ENCODE measurements at regions of chr16 and their contacts with region 1.

Region 1: DNA sequence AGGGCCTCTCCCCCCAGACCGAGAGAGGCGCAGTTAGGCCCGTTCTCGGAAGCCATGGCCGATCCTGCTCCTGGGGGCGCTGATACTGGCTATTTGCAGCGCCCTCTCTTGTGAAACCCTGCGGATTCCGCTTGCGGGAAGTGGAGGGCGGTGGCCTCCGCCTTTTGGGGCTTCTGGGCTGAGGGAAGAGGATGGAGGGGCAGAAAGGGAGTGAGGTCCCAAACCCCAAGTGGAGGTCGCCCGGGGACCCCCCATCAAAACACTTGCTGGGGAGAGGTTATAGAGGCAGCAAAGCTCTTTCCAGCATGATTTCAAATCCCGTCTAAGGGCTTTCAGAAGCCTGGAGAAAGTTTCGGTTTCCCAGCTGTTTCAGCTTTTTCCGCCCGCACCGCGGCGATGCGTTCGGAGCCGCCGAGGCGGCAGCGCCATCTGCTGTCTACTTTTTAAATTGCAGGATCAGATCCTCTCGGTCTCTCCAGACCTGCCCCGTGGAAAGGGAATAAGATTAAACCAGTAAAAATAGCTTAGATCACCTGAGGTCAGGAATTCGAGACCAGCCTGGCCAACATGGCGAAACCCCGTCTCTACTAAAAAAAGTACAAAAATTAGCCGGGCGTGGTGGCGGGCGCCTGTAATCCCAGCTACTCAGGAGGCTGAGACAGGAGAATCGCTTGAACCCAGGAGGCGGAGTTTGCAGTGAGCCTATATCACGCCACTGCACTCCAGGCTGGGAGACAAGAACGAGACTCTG is 15.8 kb downstream of the SNX20 start:
- DNase-seq: no peak
- H3K4me3 ChIP-seq: peak overlapping the region; percentile 42 to 44
- H3K27ac ChIP-seq: peak overlapping the region; percentile 9
- H3K4me1 ChIP-seq: peaks cover 16% of the 10 kb centered on the region
- H3K27me3 ChIP-seq: no peaks in the 10 kb centered on the region
- CTCF ChIP-seq: peak; percentile 75 to 81 (median 80)
- POLR2A ChIP-seq: no peak

Region 2: DNA sequence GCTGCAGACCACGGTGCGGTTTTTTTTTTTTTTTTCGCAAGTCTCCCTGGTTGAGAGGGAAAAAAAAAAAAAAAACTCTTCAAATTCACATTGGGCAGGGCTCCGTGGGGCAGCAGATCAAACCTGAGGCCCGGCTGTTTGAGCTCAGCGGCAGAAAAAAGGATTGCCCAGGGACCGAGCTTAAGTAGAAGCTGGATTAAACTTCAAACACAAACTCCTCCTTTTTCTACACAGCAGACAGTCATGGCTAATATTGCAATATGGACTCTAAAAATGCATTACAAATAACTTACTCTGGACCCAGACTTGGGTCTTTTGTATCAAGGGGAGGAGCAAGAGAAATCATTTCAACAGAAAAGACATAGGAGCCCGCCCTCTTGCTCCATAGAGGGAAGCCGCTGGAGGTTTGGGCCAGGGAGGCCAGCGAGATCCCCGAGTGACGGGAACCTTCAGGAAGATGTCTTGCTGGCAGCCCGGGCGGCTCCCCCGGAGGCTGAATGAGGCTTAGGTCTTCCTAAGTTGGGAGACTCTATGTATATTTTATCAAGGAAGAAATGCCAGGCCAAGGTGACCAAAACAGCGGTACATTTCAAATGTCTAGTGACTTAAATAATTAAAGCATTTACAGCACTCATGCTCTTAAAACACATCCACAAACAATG is 977.1 kb before region 1 on chr16:
- intact Hi-C with region 1: no loop called
- DNase-seq: no peak
- H3K4me3 ChIP-seq: no peak overlapping the region
- H3K27ac ChIP-seq: no peak overlapping the region
- H3K4me1 ChIP-seq: no peaks in the 10 kb centered on the region
- H3K27me3 ChIP-seq: no peaks in the 10 kb centered on the region
- CTCF ChIP-seq: no peak
- POLR2A ChIP-seq: no peak

Region 3: DNA sequence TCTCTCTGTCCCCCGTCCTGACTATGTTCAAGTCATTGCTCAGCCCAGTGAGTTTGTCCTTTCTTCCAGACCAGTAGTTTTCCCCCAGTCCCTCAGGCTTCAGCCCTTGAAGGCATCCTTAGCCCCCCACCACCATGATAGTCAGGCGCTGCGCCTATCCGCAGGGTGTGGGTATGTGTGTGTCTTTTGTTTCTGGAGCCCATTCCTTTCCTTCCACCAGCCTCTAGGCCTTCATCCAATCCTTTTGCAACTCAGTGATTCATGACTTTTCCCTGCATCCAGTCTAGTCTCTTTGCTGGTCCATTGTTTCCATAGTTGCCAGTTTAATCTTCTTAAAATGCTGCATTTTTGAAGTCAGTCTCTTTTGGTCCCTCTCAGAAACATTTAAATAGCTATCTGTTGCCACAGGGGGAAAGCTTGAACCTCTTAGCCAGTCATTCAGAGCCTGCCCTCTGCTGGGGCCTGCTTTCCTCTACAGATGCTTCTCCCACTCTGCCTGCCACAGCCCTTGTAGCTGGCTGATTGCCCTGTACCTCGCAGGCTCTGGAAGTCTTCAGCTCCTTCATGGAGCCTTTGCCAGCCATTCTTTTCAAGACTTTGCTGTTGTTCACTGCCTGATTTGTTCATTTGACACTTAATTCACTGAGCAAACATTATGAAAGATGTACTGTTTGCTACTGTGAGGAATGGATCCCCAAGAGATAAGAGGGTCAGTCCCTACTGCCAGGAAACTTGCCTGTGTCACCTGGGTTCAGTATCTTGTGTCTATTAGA is 454.9 kb before region 1 on chr16:
- intact Hi-C with region 1: loop called (anchors 10 kb)
- DNase-seq: no peak
- H3K4me3 ChIP-seq: no peak overlapping the region
- H3K27ac ChIP-seq: peak overlapping the region; percentile 16
- H3K4me1 ChIP-seq: peaks cover 38% of the 10 kb centered on the region
- H3K27me3 ChIP-seq: no peaks in the 10 kb centered on the region
- CTCF ChIP-seq: peak in 1 of 3 experiments; percentile 54
- POLR2A ChIP-seq: no peak

Region 4: GRCh38 chr16:50371936-50372595 is 293.2 kb before region 1 on chr16:
- intact Hi-C with region 1: loop called (anchors 10 kb)
- DNase-seq: no peak
- H3K4me3 ChIP-seq: no peak overlapping the region
- H3K27ac ChIP-seq: no peak overlapping the region
- H3K4me1 ChIP-seq: peaks cover 9% of the 10 kb centered on the region
- H3K27me3 ChIP-seq: no peaks in the 10 kb centered on the region
- CTCF ChIP-seq: no peak
- POLR2A ChIP-seq: no peak

Region 5: GRCh38 chr16:50611332-50611934 is 53.9 kb before region 1 on chr16:
- intact Hi-C with region 1: no loop called
- DNase-seq: no peak
- H3K4me3 ChIP-seq: no peak overlapping the region
- H3K27ac ChIP-seq: no peak overlapping the region
- H3K4me1 ChIP-seq: peaks cover 23% of the 10 kb centered on the region
- H3K27me3 ChIP-seq: no peaks in the 10 kb centered on the region
- CTCF ChIP-seq: no peak
- POLR2A ChIP-seq: no peak

Region 6: GRCh38 chr16:51107742-51108141 is 442.4 kb after region 1 on chr16:
- intact Hi-C with region 1: no loop called
- DNase-seq: no peak
- H3K4me3 ChIP-seq: no peak overlapping the region
- H3K27ac ChIP-seq: no peak overlapping the region
- H3K4me1 ChIP-seq: no peaks in the 10 kb centered on the region
- H3K27me3 ChIP-seq: no peaks in the 10 kb centered on the region
- CTCF ChIP-seq: no peak
- POLR2A ChIP-seq: no peak